ENCODE measurements at regions of chr6 and their contacts with region 1.

Region 1: DNA sequence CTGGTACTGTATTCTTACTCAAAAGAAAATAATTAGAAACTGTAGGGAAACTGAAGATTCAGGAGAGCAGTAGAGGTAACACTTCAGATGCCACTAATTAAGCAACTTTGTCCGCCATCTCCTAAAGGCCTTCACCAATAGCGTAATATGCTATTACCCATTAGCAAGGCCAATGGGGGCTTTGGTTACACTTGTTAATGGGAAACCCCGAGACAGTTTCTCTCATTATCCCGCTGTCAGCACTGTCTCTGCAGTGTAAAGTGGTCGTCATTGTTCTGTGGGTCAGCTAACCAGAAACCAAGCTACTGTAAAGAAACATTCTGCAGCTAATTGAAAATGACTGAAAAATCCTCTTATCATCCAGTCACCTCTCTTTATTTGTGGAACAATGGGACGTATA is 468.0 kb upstream of the POU3F2 start:
- DNase-seq: no peak
- H3K4me3 ChIP-seq: no peak overlapping the region
- H3K27ac ChIP-seq: no peak overlapping the region
- H3K4me1 ChIP-seq: no peaks in the 10 kb centered on the region
- H3K27me3 ChIP-seq: no peaks in the 10 kb centered on the region
- CTCF ChIP-seq: no peak

Region 2: GRCh38 chr6:98260382-98260781 is 106.0 kb before region 1 on chr6:
- CTCF ChIA-PET with region 1: no interaction called
- POLR2A ChIA-PET with region 1: no interaction called
- intact Hi-C with region 1: no loop called
- DNase-seq: no peak
- H3K4me3 ChIP-seq: no peak overlapping the region
- H3K27ac ChIP-seq: no peak overlapping the region
- H3K4me1 ChIP-seq: no peaks in the 10 kb centered on the region
- H3K27me3 ChIP-seq: no peaks in the 10 kb centered on the region
- CTCF ChIP-seq: no peak

Region 3: GRCh38 chr6:98458708-98459107 is 92.3 kb after region 1 on chr6:
- CTCF ChIA-PET with region 1: no interaction called
- POLR2A ChIA-PET with region 1: interaction called, 17 read pairs
- intact Hi-C with region 1: no loop called
- DNase-seq: no peak
- H3K4me3 ChIP-seq: no peak overlapping the region
- H3K27ac ChIP-seq: no peak overlapping the region
- H3K4me1 ChIP-seq: no peaks in the 10 kb centered on the region
- H3K27me3 ChIP-seq: no peaks in the 10 kb centered on the region
- CTCF ChIP-seq: no peak

Region 4: DNA sequence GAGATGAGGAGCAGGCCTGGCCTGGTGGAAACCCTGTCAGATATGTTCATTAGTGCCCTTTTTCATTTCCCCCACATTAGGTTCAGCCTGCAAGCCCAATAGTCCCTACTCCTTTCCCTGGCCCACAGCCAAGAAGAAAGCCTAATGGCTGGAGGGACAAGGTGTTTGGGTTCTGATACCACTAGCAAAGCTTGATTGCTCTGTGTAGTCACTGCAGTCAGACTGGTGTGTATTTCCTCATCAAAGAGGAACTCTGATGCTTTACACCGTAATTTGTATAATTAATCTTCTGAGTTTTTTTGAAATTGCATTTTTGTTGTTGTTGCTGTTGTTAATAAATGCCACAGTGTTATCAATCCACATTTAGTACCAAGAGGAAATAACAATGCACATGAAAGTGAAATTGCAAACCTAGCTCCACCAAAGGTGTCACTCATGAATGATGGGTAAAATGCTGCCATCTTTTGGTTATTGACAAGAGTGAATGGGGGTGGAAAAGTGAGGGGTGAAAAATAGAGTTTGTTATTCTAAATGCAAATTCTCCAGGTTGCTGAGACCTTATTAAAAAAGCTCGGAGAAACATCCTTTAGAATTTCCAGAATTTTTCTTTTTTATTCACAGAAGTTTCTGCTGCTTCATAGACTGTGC is 147.8 kb after region 1 on chr6:
- CTCF ChIA-PET with region 1: no interaction called
- POLR2A ChIA-PET with region 1: no interaction called
- intact Hi-C with region 1: no loop called
- DNase-seq: no peak
- H3K4me3 ChIP-seq: no peak overlapping the region
- H3K27ac ChIP-seq: no peak overlapping the region
- H3K4me1 ChIP-seq: no peaks in the 10 kb centered on the region
- H3K27me3 ChIP-seq: no peaks in the 10 kb centered on the region
- CTCF ChIP-seq: no peak

Region 5: DNA sequence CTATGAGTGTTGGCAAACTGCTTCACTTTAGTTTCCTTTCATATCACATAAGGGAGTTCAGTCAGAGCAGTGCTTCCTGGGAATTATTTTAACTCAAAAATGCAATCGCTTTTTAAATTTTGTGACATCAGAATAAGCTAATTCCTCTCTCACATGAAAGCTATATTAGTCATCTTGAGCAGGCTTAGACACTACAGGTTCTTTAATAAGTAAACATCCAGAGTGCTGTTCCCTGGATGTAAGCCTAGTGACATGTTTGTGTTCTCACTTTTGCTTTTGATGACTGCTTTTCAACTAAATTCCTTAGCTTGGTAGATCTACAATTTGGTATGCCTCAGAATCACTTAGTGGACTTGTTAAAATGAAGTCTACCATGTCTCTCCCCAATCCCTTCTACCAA is 215.3 kb after region 1 on chr6:
- CTCF ChIA-PET with region 1: no interaction called
- POLR2A ChIA-PET with region 1: no interaction called
- intact Hi-C with region 1: no loop called
- DNase-seq: no peak
- H3K4me3 ChIP-seq: no peak overlapping the region
- H3K27ac ChIP-seq: no peak overlapping the region
- H3K4me1 ChIP-seq: no peaks in the 10 kb centered on the region
- H3K27me3 ChIP-seq: no peaks in the 10 kb centered on the region
- CTCF ChIP-seq: no peak